HEK293T (cell line): ENCODE measurements at regions of chr9 and their contacts with region 1.

Region 1: GRCh38 chr9:28487561-28487960 is 914.3 kb upstream of the C9orf72 start:
- DNase-seq: no peak

Region 2: DNA sequence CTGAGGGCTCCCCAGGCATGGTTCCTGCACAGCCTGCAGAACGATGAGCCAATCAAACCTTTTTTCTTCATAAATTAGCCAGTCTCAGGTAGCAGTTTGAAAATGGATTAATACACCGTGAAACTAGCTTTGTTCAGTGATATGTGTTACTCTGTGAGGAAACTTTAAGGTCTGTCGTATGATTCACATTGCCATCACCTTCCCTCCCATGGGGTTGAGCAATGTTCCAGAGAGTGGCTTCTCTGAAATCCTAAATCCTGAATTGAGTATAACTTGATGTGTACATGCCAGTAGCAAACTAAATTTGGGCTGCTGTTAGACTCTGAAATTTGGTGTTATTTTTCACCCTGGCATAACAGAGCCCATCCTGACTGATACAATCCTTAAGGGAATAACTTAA is 47.9 kb before region 1 on chr9:
- CTCF ChIA-PET with region 1: interaction called, 12 read pairs
- POLR2A ChIA-PET with region 1: no interaction called
- DNase-seq: no peak

Region 3: DNA sequence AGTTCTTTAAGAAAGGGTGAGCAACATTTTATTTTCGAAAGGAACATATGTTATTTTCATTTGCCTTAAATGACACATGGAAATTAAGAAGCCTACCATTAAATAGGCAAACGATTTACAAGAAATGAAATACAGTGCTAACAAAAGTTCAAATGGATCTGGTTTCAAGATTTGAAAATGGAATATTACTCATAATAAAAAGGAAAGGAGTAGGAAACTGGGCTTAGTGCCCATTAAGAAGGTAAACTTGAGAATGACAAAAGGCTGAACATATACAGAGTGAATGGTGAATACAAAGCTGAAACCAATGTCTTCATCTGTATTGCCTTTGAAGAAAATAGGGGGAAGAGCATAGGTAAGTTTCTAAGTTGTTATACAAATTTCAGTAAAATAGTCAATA is 60.0 kb after region 1 on chr9:
- CTCF ChIA-PET with region 1: no interaction called
- POLR2A ChIA-PET with region 1: no interaction called
- DNase-seq: no peak

Region 4: DNA sequence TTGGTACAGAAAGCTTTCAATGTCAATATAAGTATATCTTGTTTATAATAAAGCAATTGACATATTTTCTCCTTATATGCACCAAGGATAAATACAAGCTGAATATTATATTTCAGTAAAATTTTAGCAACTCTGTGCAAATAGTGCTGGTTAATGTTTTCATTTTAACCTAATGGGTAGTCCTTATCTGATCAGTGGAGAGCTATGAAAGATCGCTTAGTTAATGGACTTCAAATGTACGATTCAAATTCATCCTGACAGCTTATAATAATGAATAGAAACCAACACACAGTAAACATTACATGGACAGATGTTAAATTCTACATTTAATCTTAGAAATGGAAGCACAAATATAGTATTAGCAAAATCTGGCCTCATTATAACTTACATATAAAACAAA is 580.9 kb after region 1 on chr9:
- CTCF ChIA-PET with region 1: no interaction called
- POLR2A ChIA-PET with region 1: no interaction called
- DNase-seq: no peak